Activated B cell treated with CpG ODN at 0.5 μM for 24 hours (primary cell): ENCODE measurements at regions of chr17 and their contacts with region 1.

Region 1: DNA sequence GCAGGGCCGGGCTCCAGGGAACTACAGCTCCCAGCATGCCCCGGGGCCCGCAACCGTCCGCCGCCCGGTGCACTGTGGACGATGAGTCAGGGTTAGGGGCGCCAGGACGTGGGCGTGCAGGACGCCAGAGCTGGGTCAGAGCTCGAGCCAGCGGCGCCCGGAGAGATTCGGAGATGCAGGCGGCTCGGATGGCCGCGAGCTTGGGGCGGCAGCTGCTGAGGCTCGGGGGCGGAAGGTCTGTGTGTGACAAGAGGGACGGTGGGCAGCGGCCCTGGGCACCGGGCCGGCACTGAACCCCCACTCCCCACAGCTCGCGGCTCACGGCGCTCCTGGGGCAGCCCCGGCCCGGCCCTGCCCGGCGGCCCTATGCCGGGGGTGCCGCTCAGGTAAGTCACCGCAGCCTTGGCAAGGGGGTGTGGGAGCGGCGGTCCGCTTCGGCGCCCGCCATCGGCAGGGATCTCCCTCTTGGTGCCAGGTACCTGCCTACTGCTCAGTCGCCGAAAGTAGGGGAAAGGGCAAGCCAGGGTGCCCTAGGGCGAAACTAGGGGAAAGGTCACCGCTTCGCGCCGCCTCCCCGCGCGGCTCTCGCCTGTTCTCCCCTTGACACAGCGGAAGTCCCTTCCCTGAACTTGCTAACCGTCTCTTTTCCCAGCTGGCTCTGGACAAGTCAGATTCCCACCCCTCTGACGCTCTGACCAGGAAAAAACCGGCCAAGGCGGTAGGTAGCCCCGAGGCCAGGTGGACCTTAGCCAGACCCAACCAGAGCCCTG is at the starts of genes ACADVL and DLG4:
- DNase-seq: peak; percentile 75
- ATAC-seq: peak; percentile 75
- H3K4me3 Mint-ChIP-seq: peak within 1 kb of the TSS; percentile 96
- H3K27ac Mint-ChIP-seq: peak within 1 kb of the TSS; percentile 91
- H3K4me1 Mint-ChIP-seq: peaks cover 53% of the 10 kb centered on the region
- H3K27me3 Mint-ChIP-seq: no peaks in the 10 kb centered on the region
- CTCF ChIP-seq: no peak
- total RNA-seq, gene ACADVL: 438 and 469 TPM in 2 replicates
- total RNA-seq, gene DLG4: 3.9 and 5.0 TPM in 2 replicates

Region 2: GRCh38 chr17:7204828-7205461 is 15.1 kb before region 1 on chr17:
- CTCF ChIA-PET with region 1: no interaction called
- POLR2A ChIA-PET with region 1: interaction called, 10 read pairs
- intact Hi-C with region 1: loop called (anchors 1 kb)
- DNase-seq: peak; percentile 95
- ATAC-seq: peak; percentile 88
- H3K4me3 Mint-ChIP-seq: peak overlapping the region; percentile 87
- H3K27ac Mint-ChIP-seq: peak overlapping the region; percentile 94
- H3K4me1 Mint-ChIP-seq: peaks cover 30% of the 10 kb centered on the region
- H3K27me3 Mint-ChIP-seq: no peaks in the 10 kb centered on the region
- CTCF ChIP-seq: no peak

Region 3: DNA sequence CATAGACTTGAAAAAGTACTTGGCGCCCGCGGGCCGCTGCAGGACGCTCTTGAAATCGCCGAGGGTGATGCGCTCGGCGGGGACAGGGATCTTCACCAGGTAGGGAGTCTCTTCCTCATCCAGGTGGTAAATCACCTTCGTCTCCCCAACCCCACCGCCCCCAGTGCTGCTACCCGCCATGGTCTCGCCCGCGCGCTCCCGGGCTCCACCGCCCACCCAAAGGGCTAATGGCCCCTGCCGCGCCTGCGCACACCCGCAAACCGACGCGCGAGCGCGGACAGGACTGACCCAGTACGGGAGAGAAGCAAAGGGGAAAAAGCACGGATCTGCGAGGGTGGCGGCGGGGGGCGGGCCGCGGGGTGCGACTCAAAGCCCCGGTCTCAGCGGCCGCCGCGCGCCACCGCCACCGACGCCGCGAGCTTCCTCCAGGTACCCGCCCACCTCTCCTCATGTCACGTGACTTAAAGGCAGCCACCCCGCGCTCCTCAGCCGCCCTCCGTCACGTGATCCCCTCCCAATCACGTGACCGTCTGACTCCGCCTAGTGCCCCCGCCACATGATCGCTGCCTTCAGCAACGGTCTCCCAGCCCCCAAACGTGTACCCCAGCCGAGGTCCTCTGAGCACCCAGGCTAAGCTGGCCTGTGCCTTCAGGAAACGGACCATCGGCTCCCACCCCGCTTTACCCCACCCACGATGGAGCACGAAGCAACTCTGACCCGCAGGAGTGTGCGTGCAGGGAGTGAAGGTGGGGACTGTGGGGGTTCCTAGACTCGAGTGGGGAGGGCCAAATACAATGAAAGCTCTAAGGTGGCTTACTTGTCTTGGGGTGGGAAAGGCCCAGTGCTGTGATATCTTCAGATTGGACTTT is 14.3 kb after region 1 on chr17 and contains the start of gene DVL2:
- CTCF ChIA-PET with region 1: interaction called, 4 read pairs
- POLR2A ChIA-PET with region 1: interaction called, 245 read pairs
- intact Hi-C with region 1: loop called (anchors 1 kb)
- DNase-seq: peak; percentile 93
- ATAC-seq: peak; percentile 47
- H3K4me3 Mint-ChIP-seq: peak within 1 kb of the TSS; percentile 86
- H3K27ac Mint-ChIP-seq: peak within 1 kb of the TSS; percentile 88
- H3K4me1 Mint-ChIP-seq: peaks cover 51% of the 10 kb centered on the region
- H3K27me3 Mint-ChIP-seq: no peaks in the 10 kb centered on the region
- CTCF ChIP-seq: no peak
- total RNA-seq, gene DVL2: 56.1 and 64.6 TPM in 2 replicates

Region 4: GRCh38 chr17:7252176-7253043 is 32.4 kb after region 1 on chr17 and contains the start of gene ELP5:
- CTCF ChIA-PET with region 1: interaction called, 3 read pairs
- POLR2A ChIA-PET with region 1: interaction called, 10 read pairs
- intact Hi-C with region 1: no loop called
- DNase-seq: no peak
- ATAC-seq: peak; percentile 61
- H3K4me3 Mint-ChIP-seq: peak within 1 kb of the TSS; percentile 98
- H3K27ac Mint-ChIP-seq: peak within 1 kb of the TSS; percentile 100
- H3K4me1 Mint-ChIP-seq: peaks cover 44% of the 10 kb centered on the region
- H3K27me3 Mint-ChIP-seq: no peaks in the 10 kb centered on the region
- CTCF ChIP-seq: no peak
- total RNA-seq, gene ELP5: 49.2 and 53.6 TPM in 2 replicates

Region 5: GRCh38 chr17:7280519-7281429 is 60.8 kb after region 1 on chr17:
- CTCF ChIA-PET with region 1: interaction called, 4 read pairs
- POLR2A ChIA-PET with region 1: interaction called, 5 read pairs
- intact Hi-C with region 1: loop called (anchors 1 kb)
- DNase-seq: peak; percentile 82
- ATAC-seq: peak; percentile 83
- H3K4me3 Mint-ChIP-seq: peak overlapping the region; percentile 82
- H3K27ac Mint-ChIP-seq: peak overlapping the region; percentile 77
- H3K4me1 Mint-ChIP-seq: peaks cover 14% of the 10 kb centered on the region
- H3K27me3 Mint-ChIP-seq: peaks cover 12% of the 10 kb centered on the region
- CTCF ChIP-seq: peak; percentile 42